ENCODE measurements at regions of chr15 and their contacts with region 1.

Region 1: GRCh38 chr15:87354661-87355410 is 901.7 kb downstream of the NTRK3 start:
- DNase-seq: no peak
- ATAC-seq: no peak

Region 2: DNA sequence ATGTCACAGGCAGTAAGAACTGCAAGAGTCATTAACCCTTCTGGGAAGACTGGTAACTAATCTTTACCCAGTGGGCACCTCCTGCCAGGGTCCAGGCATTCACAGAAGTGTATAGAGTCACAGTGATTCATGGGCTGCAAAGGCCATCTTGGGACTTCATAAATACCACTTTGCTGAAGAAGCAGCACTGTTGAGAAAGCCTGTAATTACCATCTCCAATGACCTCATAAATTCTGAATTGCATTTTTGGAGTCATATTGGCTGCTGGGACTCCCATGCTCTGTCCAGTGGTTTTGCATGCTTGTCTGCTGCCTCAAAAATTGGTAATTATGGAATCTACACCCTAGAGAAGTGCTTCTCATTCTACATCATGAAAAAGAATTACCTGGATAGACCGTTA is 64.5 kb after region 1 on chr15:
- intact Hi-C with region 1: loop called (anchors 10 kb)
- DNase-seq: no peak
- ATAC-seq: no peak

Region 3: DNA sequence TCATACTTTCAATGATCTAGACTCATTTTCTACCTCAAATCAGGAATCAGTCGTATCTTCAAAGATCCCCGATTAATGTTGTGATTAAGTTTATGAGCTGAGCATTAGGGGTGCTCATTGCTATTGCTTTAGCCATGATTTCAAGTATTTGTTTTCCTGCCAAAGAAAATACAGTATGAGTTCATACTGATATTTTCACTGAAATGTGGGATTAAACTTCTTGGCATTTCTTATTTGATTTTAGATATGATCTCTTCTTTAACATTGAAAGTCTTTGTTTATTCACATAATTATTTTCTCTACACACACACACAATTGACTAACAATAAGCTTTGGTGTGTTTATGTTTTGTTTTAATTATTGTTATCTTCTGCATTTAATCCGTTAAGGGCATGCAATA is 116.1 kb after region 1 on chr15:
- intact Hi-C with region 1: no loop called
- DNase-seq: no peak
- ATAC-seq: no peak

Measured in Right ventricle myocardium inferior (tissue), 1 donor.